ENCODE measurements at regions of chr20 and their contacts with region 1.

Region 1: GRCh38 chr20:46022411-46023147 is 6.4 kb upstream of the SLC12A5 start:
- DNase-seq: peak; percentile 47 to 60 (median 55)
- H3K4me3 ChIP-seq: peak overlapping the region in 5 of 7 experiments; percentile 23 to 81 (median 55)
- H3K27ac ChIP-seq: no peak overlapping the region
- H3K4me1 ChIP-seq: peaks cover 0 to 17% (median 14%) of the 10 kb centered on the region in 4 experiments
- H3K27me3 ChIP-seq: peaks cover 0 to 54% (median 11%) of the 10 kb centered on the region in 5 experiments

Region 2: GRCh38 chr20:46089417-46090388 is 67.1 kb after region 1 on chr20 and contains the start of gene NCOA5:
- CTCF ChIA-PET with region 1: interaction called, 26 read pairs
- POLR2A ChIA-PET with region 1: no interaction called
- DNase-seq: peak; percentile 95 to 97 (median 96)
- H3K4me3 ChIP-seq: peak within 1 kb of the TSS; percentile 68 to 96 (median 87)
- H3K27ac ChIP-seq: peak within 1 kb of the TSS; percentile 75 to 87
- H3K4me1 ChIP-seq: peaks cover 11 to 38% (median 19%) of the 10 kb centered on the region in 4 experiments
- H3K27me3 ChIP-seq: no peaks in the 10 kb centered on the region

Measured in common myeloid progenitor, CD34-positive (primary cell).